ENCODE measurements at regions of chr1 and their contacts with region 1.

Region 1: GRCh38 chr1:31938174-31938950 is at the start of gene PTP4A2:
- DNase-seq: peak; percentile 26 to 90 (median 70)
- ATAC-seq: peak; percentile 69 to 80 (median 74)
- H3K4me3 ChIP-seq: peak within 1 kb of the TSS; percentile 72 to 93
- H3K4me3 Mint-ChIP-seq: peak within 1 kb of the TSS; percentile 89 to 94 (median 90)
- H3K27ac ChIP-seq: peak within 1 kb of the TSS; percentile 90
- H3K27ac Mint-ChIP-seq: peak within 1 kb of the TSS; percentile 95 to 98
- H3K4me1 ChIP-seq: peaks cover 50 to 70% of the 10 kb centered on the region in 2 experiments
- H3K4me1 Mint-ChIP-seq: peaks cover 69 to 87% (median 70%) of the 10 kb centered on the region in 3 donors
- H3K27me3 ChIP-seq: no peaks in the 10 kb centered on the region
- H3K27me3 Mint-ChIP-seq: no peaks in the 10 kb centered on the region
- total RNA-seq, gene PTP4A2: 187 to 341 (median 224) TPM

Region 2: DNA sequence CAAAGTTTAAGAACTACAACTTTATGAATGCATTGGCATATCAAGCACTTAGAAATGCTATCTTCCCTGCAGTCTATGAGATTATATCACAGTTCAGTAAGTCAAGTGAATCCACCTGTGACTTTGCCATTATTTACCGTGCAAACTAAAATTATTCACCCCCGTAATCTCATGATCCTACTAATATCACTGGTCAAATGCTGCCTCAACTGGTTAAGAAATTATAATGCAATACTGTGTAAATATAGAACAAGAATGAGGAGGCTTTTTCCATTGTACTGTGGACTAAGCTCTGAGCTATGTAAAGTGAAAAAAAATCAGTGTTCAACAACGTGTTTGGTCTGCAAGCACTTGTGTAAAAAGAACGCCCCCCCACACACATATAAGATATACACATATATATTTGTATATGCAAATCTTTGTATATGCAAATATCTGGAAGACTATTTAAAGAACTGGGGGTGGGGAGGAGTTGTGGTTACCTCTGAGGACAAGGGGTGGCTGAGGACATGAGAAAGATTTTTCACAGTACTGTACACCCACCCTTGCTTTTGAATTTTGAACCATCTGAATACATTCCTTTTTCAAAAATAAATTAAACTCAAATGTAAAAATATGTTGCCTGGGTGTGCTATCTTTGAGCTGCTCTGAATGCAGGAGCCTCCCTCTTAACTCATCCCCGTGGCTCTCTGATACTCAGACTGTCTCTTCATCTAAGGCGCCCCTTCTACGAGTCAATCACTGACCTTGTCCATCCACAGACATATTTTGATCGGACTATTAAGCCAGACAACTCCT is 57.3 kb before region 1 on chr1:
- CTCF ChIA-PET with region 1: no interaction called
- POLR2A ChIA-PET with region 1: no interaction called
- DNase-seq: no peak
- ATAC-seq: no peak
- H3K4me3 ChIP-seq: no peak overlapping the region
- H3K4me3 Mint-ChIP-seq: no peak overlapping the region
- H3K27ac ChIP-seq: no peak overlapping the region
- H3K27ac Mint-ChIP-seq: no peak overlapping the region
- H3K4me1 ChIP-seq: peaks cover 12 to 17% of the 10 kb centered on the region in 2 experiments
- H3K4me1 Mint-ChIP-seq: peaks cover 11 to 30% (median 15%) of the 10 kb centered on the region in 3 donors
- H3K27me3 ChIP-seq: no peaks in the 10 kb centered on the region
- H3K27me3 Mint-ChIP-seq: no peaks in the 10 kb centered on the region

Region 3: GRCh38 chr1:31912839-31913239 is 25.5 kb before region 1 on chr1:
- CTCF ChIA-PET with region 1: interaction called in 1 of 2 experiments, 20 read pairs
- POLR2A ChIA-PET with region 1: interaction called in 1 of 2 experiments, 3 read pairs
- DNase-seq: no peak
- ATAC-seq: no peak
- H3K4me3 ChIP-seq: no peak overlapping the region
- H3K4me3 Mint-ChIP-seq: peak overlapping the region in 2 of 3 donors; percentile 14 to 31
- H3K27ac ChIP-seq: peak overlapping the region; percentile 27
- H3K27ac Mint-ChIP-seq: peak overlapping the region; percentile 66 to 83
- H3K4me1 ChIP-seq: peaks cover 19 to 22% of the 10 kb centered on the region in 2 experiments
- H3K4me1 Mint-ChIP-seq: peaks cover 60 to 68% (median 62%) of the 10 kb centered on the region in 3 donors
- H3K27me3 ChIP-seq: no peaks in the 10 kb centered on the region
- H3K27me3 Mint-ChIP-seq: no peaks in the 10 kb centered on the region

Region 4: GRCh38 chr1:31923901-31924535 is 14.3 kb before region 1 on chr1:
- CTCF ChIA-PET with region 1: interaction called in 1 of 2 experiments, 28 read pairs
- POLR2A ChIA-PET with region 1: interaction called, 4 to 9 read pairs
- DNase-seq: peak in 1 of 35 experiments; percentile 60
- ATAC-seq: peak in 1 of 4 experiments; percentile 49
- H3K4me3 ChIP-seq: no peak overlapping the region
- H3K4me3 Mint-ChIP-seq: peak overlapping the region; percentile 46 to 89 (median 66)
- H3K27ac ChIP-seq: peak overlapping the region; percentile 59
- H3K27ac Mint-ChIP-seq: peak overlapping the region; percentile 75 to 78
- H3K4me1 ChIP-seq: peaks cover 55 to 60% of the 10 kb centered on the region in 2 experiments
- H3K4me1 Mint-ChIP-seq: peaks cover 81 to 88% (median 81%) of the 10 kb centered on the region in 3 donors
- H3K27me3 ChIP-seq: no peaks in the 10 kb centered on the region
- H3K27me3 Mint-ChIP-seq: no peaks in the 10 kb centered on the region

Region 5: GRCh38 chr1:31955917-31956736 is 17.8 kb after region 1 on chr1:
- CTCF ChIA-PET with region 1: interaction called, 4 to 28 read pairs
- POLR2A ChIA-PET with region 1: interaction called in 1 of 2 experiments, 4 read pairs
- DNase-seq: peak in 34 of 35 experiments; percentile 46 to 89 (median 68)
- ATAC-seq: peak; percentile 73 to 95 (median 80)
- H3K4me3 ChIP-seq: no peak overlapping the region
- H3K4me3 Mint-ChIP-seq: peak overlapping the region; percentile 1 to 67 (median 43)
- H3K27ac ChIP-seq: peak overlapping the region; percentile 85
- H3K27ac Mint-ChIP-seq: peak overlapping the region; percentile 87 to 88
- H3K4me1 ChIP-seq: peaks cover 26 to 71% of the 10 kb centered on the region in 2 experiments
- H3K4me1 Mint-ChIP-seq: peaks cover 56 to 82% (median 73%) of the 10 kb centered on the region in 3 donors
- H3K27me3 ChIP-seq: no peaks in the 10 kb centered on the region
- H3K27me3 Mint-ChIP-seq: no peaks in the 10 kb centered on the region

Region 6: DNA sequence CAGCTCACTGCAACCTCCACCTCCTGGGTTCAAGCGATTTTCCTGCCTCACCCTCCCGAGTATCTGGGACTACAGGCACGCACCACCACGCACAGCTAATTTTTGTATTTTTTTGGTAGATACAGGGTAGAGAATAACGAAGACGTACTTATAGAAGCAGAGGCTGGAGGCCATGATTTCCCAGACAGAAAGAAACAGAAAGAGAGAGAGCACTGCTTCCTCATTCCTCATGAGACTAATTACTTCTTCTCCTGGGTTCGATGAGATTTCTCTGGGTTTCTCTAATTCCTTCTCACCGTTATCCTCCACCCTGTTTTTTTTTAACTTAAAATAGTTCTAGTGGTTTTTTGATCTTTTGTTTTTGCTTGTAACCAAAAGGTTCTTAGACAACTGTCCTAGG is 23.2 kb after region 1 on chr1:
- CTCF ChIA-PET with region 1: interaction called, 9 to 28 read pairs
- POLR2A ChIA-PET with region 1: interaction called in 1 of 2 experiments, 5 read pairs
- DNase-seq: no peak
- ATAC-seq: no peak
- H3K4me3 ChIP-seq: no peak overlapping the region
- H3K4me3 Mint-ChIP-seq: peak overlapping the region in 2 of 3 donors; percentile 21 to 38
- H3K27ac ChIP-seq: no peak overlapping the region
- H3K27ac Mint-ChIP-seq: peak overlapping the region; percentile 84 to 90
- H3K4me1 ChIP-seq: peaks cover 18 to 55% of the 10 kb centered on the region in 2 experiments
- H3K4me1 Mint-ChIP-seq: peaks cover 49 to 68% (median 61%) of the 10 kb centered on the region in 3 donors
- H3K27me3 ChIP-seq: no peaks in the 10 kb centered on the region
- H3K27me3 Mint-ChIP-seq: no peaks in the 10 kb centered on the region

Region 7: GRCh38 chr1:32151319-32151787 is 213.0 kb after region 1 on chr1:
- CTCF ChIA-PET with region 1: no interaction called
- POLR2A ChIA-PET with region 1: interaction called in 1 of 2 experiments, 12 read pairs
- DNase-seq: no peak
- ATAC-seq: no peak
- H3K4me3 ChIP-seq: no peak overlapping the region
- H3K4me3 Mint-ChIP-seq: no peak overlapping the region
- H3K27ac ChIP-seq: no peak overlapping the region
- H3K27ac Mint-ChIP-seq: no peak overlapping the region
- H3K4me1 ChIP-seq: no peaks in the 10 kb centered on the region
- H3K4me1 Mint-ChIP-seq: peaks cover 18 to 28% (median 20%) of the 10 kb centered on the region in 3 donors
- H3K27me3 ChIP-seq: no peaks in the 10 kb centered on the region
- H3K27me3 Mint-ChIP-seq: no peaks in the 10 kb centered on the region

Measured in T-cell (primary cell).